Caco-2 (cell line): ENCODE measurements at regions of chr13 and their contacts with region 1.

Region 1: DNA sequence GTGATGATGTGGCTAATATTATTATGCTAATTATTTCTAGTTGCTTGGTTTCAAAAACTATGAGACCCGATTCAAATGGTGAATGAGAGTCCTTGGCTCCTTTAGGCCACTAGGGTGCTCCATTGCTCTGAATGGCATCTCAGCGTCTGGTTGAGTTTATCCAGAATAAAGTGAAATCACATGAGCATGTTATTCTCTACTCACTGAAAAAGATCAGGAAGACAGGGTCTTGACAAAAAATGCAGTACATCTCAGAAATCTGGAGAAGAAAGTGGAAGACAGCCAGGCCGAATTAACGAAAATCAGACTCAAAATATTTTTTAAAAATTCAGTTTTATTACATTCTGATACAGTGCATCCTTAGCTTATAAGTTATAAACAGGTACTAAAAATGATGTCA is 516.2 kb downstream of the MYO16 start:
- DNase-seq: peak in 1 of 2 experiments; percentile 60
- H3K4me3 ChIP-seq: no peak overlapping the region
- H3K4me3 Mint-ChIP-seq: no peak overlapping the region
- H3K27ac Mint-ChIP-seq: no peak overlapping the region
- H3K4me1 ChIP-seq: no peaks in the 10 kb centered on the region
- H3K4me1 Mint-ChIP-seq: peaks cover 7% of the 10 kb centered on the region
- H3K27me3 ChIP-seq: no peaks in the 10 kb centered on the region
- H3K27me3 Mint-ChIP-seq: no peaks in the 10 kb centered on the region
- CTCF ChIP-seq: peak; percentile 65 to 90

Region 2: GRCh38 chr13:109275852-109276251 is 130.2 kb after region 1 on chr13:
- CTCF ChIA-PET with region 1: no interaction called
- POLR2A ChIA-PET with region 1: no interaction called
- intact Hi-C with region 1: loop called (anchors 1 kb)
- DNase-seq: peak; percentile 63 to 70
- H3K4me3 ChIP-seq: no peak overlapping the region
- H3K4me3 Mint-ChIP-seq: peak overlapping the region; percentile 29
- H3K27ac Mint-ChIP-seq: peak overlapping the region; percentile 44
- H3K4me1 ChIP-seq: peaks cover 57% of the 10 kb centered on the region
- H3K4me1 Mint-ChIP-seq: peaks cover 40% of the 10 kb centered on the region
- H3K27me3 ChIP-seq: no peaks in the 10 kb centered on the region
- H3K27me3 Mint-ChIP-seq: no peaks in the 10 kb centered on the region
- CTCF ChIP-seq: peak in 1 of 2 experiments; percentile 45

Region 3: DNA sequence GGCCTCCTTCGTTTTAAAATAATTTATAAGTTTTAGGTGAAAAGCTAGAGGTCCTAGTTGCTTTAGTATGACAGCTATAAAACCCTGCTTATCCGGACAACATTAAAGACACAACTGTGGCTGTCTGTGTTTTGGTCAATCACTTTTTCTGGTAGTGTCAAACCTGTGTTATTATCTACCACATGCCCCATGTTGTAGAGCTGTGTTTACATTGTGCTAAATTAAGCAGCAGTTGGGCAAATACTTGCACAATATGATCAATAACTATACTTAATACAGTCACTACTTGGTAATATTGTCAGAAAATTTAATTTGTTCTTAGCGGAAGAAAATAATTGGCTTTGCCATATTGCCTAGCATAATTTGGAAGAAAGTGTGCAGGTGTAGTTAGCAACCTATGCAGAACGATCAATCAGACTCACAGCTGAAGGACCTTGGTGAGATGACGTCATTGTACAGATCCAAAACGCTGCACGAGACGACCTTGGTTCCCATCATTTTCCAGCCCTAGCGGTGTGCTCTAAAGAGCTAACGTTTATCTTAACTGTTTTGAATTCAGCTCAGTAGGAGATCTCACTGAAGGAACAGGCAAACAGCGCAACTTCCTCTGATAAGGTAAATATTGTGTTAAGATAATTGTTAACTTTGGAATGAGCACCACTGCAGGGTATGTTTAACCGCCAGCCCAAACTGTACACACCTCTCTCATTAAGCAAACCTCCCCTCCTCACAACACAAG is 164.2 kb after region 1 on chr13:
- CTCF ChIA-PET with region 1: no interaction called
- POLR2A ChIA-PET with region 1: no interaction called
- intact Hi-C with region 1: loop called (anchors 10 kb)
- DNase-seq: peak; percentile 57
- H3K4me3 ChIP-seq: no peak overlapping the region
- H3K4me3 Mint-ChIP-seq: no peak overlapping the region
- H3K27ac Mint-ChIP-seq: no peak overlapping the region
- H3K4me1 ChIP-seq: peaks cover 12% of the 10 kb centered on the region
- H3K4me1 Mint-ChIP-seq: peaks cover 7% of the 10 kb centered on the region
- H3K27me3 ChIP-seq: no peaks in the 10 kb centered on the region
- H3K27me3 Mint-ChIP-seq: no peaks in the 10 kb centered on the region
- CTCF ChIP-seq: no peak

Region 4: DNA sequence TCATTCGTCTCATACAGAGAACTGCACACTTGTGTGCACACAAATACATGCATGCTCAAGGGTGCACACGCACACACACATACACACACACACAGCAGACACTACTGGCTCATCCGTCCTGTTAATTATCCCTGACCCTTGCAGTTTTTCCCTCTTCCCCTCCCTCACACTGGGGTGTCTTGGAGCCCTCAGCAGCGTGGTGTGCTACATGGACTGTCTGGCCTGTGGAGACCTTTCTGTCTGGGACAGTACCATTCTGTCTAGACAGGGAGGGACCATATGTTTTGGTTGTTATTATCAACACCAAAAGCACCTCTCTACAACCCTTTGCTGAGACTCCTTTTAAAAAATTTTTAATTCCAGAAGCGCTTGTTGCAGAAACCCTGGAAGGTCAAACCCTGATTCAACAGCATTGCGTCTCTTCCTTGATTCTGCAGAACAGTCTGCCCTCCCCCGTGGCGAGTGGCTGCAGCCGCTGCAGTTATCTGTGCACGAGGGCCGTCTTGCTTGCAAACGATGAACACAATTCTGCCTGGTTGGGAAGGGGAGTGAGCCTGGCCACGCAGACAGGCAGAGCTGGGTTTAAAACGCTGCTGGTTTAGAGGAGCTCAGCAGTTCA is 266.8 kb after region 1 on chr13:
- CTCF ChIA-PET with region 1: no interaction called
- POLR2A ChIA-PET with region 1: no interaction called
- intact Hi-C with region 1: loop called (anchors 2 kb)
- DNase-seq: peak; percentile 76 to 82
- H3K4me3 ChIP-seq: peak overlapping the region; percentile 21
- H3K4me3 Mint-ChIP-seq: peak overlapping the region; percentile 23
- H3K27ac Mint-ChIP-seq: no peak overlapping the region
- H3K4me1 ChIP-seq: no peaks in the 10 kb centered on the region
- H3K4me1 Mint-ChIP-seq: peaks cover 7% of the 10 kb centered on the region
- H3K27me3 ChIP-seq: no peaks in the 10 kb centered on the region
- H3K27me3 Mint-ChIP-seq: peaks cover 6% of the 10 kb centered on the region
- CTCF ChIP-seq: no peak

Region 5: GRCh38 chr13:109586509-109587346 is 441.1 kb after region 1 on chr13:
- CTCF ChIA-PET with region 1: no interaction called
- POLR2A ChIA-PET with region 1: no interaction called
- intact Hi-C with region 1: loop called (anchors 10 kb)
- DNase-seq: peak; percentile 77 to 90
- H3K4me3 ChIP-seq: 0 out of 2 replicates have a peak overlapping the region, but pooled peaks have one; percentile 8
- H3K4me3 Mint-ChIP-seq: peak overlapping the region; percentile 64
- H3K27ac Mint-ChIP-seq: peak overlapping the region; percentile 77
- H3K4me1 ChIP-seq: peaks cover 30% of the 10 kb centered on the region
- H3K4me1 Mint-ChIP-seq: peaks cover 34% of the 10 kb centered on the region
- H3K27me3 ChIP-seq: no peaks in the 10 kb centered on the region
- H3K27me3 Mint-ChIP-seq: no peaks in the 10 kb centered on the region
- CTCF ChIP-seq: peak in 1 of 2 experiments; percentile 3

Region 6: GRCh38 chr13:109747524-109747923 is 601.9 kb after region 1 on chr13:
- CTCF ChIA-PET with region 1: no interaction called
- POLR2A ChIA-PET with region 1: no interaction called
- intact Hi-C with region 1: loop called (anchors 1 kb)
- DNase-seq: peak in 1 of 2 experiments; percentile 25
- H3K4me3 ChIP-seq: no peak overlapping the region
- H3K4me3 Mint-ChIP-seq: no peak overlapping the region
- H3K27ac Mint-ChIP-seq: no peak overlapping the region
- H3K4me1 ChIP-seq: peaks cover 4% of the 10 kb centered on the region; the same call in 1 of the 2 replicates
- H3K4me1 Mint-ChIP-seq: peaks cover 5% of the 10 kb centered on the region
- H3K27me3 ChIP-seq: no peaks in the 10 kb centered on the region
- H3K27me3 Mint-ChIP-seq: peaks cover 2% of the 10 kb centered on the region
- CTCF ChIP-seq: peak; percentile 12 to 41

Region 7: GRCh38 chr13:110108347-110109174 is 962.9 kb after region 1 on chr13:
- CTCF ChIA-PET with region 1: no interaction called
- POLR2A ChIA-PET with region 1: no interaction called
- intact Hi-C with region 1: loop called (anchors 1 kb)
- DNase-seq: peak; percentile 82 to 84
- H3K4me3 ChIP-seq: no peak overlapping the region
- H3K4me3 Mint-ChIP-seq: no peak overlapping the region
- H3K27ac Mint-ChIP-seq: no peak overlapping the region
- H3K4me1 ChIP-seq: no peaks in the 10 kb centered on the region
- H3K4me1 Mint-ChIP-seq: peaks cover 6% of the 10 kb centered on the region
- H3K27me3 ChIP-seq: no peaks in the 10 kb centered on the region
- H3K27me3 Mint-ChIP-seq: no peaks in the 10 kb centered on the region
- CTCF ChIP-seq: peak; percentile 73 to 80